ENCODE measurements at regions of chr11 and their contacts with region 1.

Region 1: GRCh38 chr11:126989942-126990715 is 10.4 kb downstream of the KIRREL3 start:
- DNase-seq: peak; percentile 35 to 90 (median 75)
- ATAC-seq: peak; percentile 77 to 96 (median 95)
- H3K4me3 ChIP-seq: no peak overlapping the region
- H3K27ac ChIP-seq: no peak overlapping the region
- H3K4me1 ChIP-seq: no peaks in the 10 kb centered on the region
- H3K27me3 ChIP-seq: no peaks in the 10 kb centered on the region
- CTCF ChIP-seq: peak; percentile 81 to 95 (median 93)

Region 2: GRCh38 chr11:126607374-126607773 is 382.8 kb before region 1 on chr11:
- intact Hi-C with region 1: loop called in 2 of 3 experiments (anchors 5 to 10 kb)
- DNase-seq: peak; percentile 43 to 87 (median 74)
- ATAC-seq: peak; percentile 84 to 99 (median 96)
- H3K4me3 ChIP-seq: no peak overlapping the region
- H3K27ac ChIP-seq: no peak overlapping the region
- H3K4me1 ChIP-seq: no peaks in the 10 kb centered on the region
- H3K27me3 ChIP-seq: no peaks in the 10 kb centered on the region
- CTCF ChIP-seq: peak; percentile 70 to 79 (median 76)

Region 3: DNA sequence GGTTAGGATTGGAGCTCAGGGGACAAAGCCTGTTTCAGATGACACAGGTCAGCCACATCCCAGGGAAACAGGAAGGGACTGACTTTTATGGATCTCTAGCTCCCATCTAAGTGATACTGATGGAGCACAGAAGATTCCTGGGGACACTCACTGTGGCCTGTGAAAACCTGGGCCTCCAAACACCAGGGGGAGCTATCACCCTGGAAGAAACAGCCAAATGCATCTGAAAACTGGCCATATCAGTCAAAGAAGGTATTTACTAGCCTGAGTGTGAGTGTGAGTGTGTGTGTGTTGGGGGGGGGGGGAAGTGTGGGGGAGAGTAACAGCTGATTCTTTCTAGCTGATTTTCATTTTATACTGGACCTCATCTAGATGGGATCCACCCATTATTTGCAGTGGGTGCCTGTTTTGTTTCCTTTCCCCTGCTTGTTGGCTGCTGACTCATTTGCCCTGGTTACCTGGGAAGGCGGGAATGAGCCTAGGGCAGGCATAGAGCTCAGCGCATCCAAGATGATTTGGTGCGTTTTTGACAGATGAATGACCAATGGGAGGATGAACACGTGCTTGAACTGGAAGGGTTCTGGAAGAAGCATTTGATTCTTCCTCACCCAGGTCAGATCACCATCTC is 273.6 kb before region 1 on chr11:
- intact Hi-C with region 1: loop called (anchors 5 to 10 kb)
- DNase-seq: peak in 4 of 6 donors; percentile 23 to 66 (median 56)
- ATAC-seq: peak; percentile 56 to 84 (median 77)
- H3K4me3 ChIP-seq: no peak overlapping the region
- H3K27ac ChIP-seq: no peak overlapping the region
- H3K4me1 ChIP-seq: no peaks in the 10 kb centered on the region
- H3K27me3 ChIP-seq: no peaks in the 10 kb centered on the region
- CTCF ChIP-seq: peak in 3 of 4 donors; percentile 33 to 55 (median 44)

Region 4: DNA sequence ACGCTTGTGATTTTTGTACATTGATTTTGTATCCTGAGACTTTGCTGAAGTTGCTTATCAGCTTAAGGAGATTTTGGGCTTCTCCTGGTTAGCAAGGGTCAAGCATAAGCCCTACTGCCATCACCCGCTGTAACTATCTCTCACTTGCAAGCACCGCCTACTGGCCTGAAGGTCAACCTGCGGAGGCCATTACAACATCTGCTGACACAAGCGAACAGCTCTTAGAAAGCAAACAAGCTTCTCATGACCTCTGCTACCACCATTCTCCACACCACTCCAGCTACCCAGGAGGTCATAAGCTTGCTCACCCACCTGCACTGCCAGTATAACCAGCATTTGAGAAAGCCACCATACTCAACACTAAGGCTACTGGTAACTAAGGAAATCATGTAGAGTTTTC is 298.8 kb after region 1 on chr11:
- intact Hi-C with region 1: no loop called
- DNase-seq: no peak
- ATAC-seq: no peak
- H3K4me3 ChIP-seq: no peak overlapping the region
- H3K27ac ChIP-seq: no peak overlapping the region
- H3K4me1 ChIP-seq: no peaks in the 10 kb centered on the region
- H3K27me3 ChIP-seq: no peaks in the 10 kb centered on the region
- CTCF ChIP-seq: no peak